HepG2 (cell line): ENCODE measurements at regions of chr2 and their contacts with region 1.

Region 1: GRCh38 chr2:76599732-76600368 is 889.1 kb upstream of the GCFC2 start:
- DNase-seq: peak; percentile 93
- ATAC-seq: peak; percentile 100
- H3K4me3 ChIP-seq: no peak overlapping the region
- H3K27ac ChIP-seq: no peak overlapping the region
- H3K4me1 ChIP-seq: no peaks in the 10 kb centered on the region
- H3K27me3 ChIP-seq: no peaks in the 10 kb centered on the region
- CTCF ChIP-seq: peak; percentile 91
- EP300 ChIP-seq: no peak
- POLR2A ChIP-seq: no peak
- RAD21 ChIP-seq: peak; percentile 91

Region 2: DNA sequence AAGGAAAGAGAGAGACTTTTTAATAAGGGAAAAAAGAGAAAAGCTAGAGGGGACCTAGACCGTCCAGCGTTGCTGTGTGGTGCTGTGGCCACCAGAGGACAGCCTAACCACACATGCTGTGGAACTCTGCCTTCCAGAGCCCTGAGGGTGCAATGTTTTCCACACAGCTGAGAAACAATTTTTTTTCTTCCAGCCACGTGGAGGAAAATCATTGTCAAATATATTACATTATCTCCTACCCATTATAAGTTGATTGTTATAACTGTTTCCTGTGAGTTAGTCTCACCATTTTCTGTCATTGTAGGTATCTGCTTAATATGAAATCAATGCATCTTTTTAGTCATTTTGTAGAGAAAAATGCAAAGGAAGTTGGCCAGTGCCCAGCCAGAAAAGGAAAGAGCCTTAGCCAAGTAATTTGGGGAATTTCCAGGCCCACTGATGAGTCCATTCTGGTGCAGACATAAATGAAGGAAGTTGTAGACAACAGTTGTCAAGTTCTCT is 959.2 kb before region 1 on chr2:
- CTCF ChIA-PET with region 1: no interaction called
- POLR2A ChIA-PET with region 1: no interaction called
- in situ Hi-C with region 1: no loop called
- intact Hi-C with region 1: loop called (anchors 2 kb)
- DNase-seq: peak; percentile 56
- ATAC-seq: peak; percentile 97
- H3K4me3 ChIP-seq: no peak overlapping the region
- H3K27ac ChIP-seq: no peak overlapping the region
- H3K4me1 ChIP-seq: peaks cover 17% of the 10 kb centered on the region
- H3K27me3 ChIP-seq: no peaks in the 10 kb centered on the region; a peak in 1 of 5 replicates
- CTCF ChIP-seq: peak; percentile 96
- EP300 ChIP-seq: no peak
- POLR2A ChIP-seq: no peak
- RAD21 ChIP-seq: peak; percentile 93

Region 3: GRCh38 chr2:75729861-75730260 is 870.0 kb before region 1 on chr2:
- CTCF ChIA-PET with region 1: interaction called, 3 read pairs
- POLR2A ChIA-PET with region 1: no interaction called
- in situ Hi-C with region 1: no loop called
- intact Hi-C with region 1: loop called (anchors 1 kb)
- DNase-seq: peak; percentile 12
- ATAC-seq: 0 out of 3 replicates have a peak, but pooled peaks have one; percentile 36
- H3K4me3 ChIP-seq: no peak overlapping the region
- H3K27ac ChIP-seq: no peak overlapping the region
- H3K4me1 ChIP-seq: no peaks in the 10 kb centered on the region
- H3K27me3 ChIP-seq: 0 out of 5 replicates have a peak, but pooled peaks cover 0 to 6% of the 10 kb centered on the region in 2 experiments
- CTCF ChIP-seq: peak; percentile 60
- EP300 ChIP-seq: no peak
- POLR2A ChIP-seq: no peak
- RAD21 ChIP-seq: no peak

Region 4: DNA sequence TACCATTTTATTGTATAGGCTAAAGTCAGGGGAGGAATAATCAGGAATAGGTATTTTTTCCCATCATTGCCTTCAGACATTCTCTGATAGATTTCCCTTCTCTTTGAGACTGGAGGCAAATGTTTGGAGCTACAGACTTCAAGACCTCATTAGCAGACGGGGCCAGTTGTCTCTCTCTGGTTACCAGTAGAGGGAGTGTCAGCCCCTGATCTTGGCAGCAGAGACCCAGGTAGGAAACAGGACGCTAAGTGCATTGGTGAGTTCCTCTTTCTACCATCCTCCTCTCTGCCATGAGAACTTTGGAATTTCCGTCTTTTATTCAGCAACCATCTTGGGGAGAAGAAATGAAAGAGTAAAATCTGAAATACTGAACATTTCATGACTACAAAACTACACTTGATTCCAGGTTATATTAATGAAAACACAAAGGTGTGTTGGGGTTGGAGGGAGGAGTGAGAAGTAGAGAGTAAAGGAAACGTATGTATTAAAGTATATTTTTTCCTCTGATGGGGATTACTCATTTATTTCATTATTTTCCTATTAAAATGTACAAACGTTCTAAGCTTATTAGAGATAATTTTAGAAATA is 703.0 kb before region 1 on chr2:
- CTCF ChIA-PET with region 1: interaction called, 13 read pairs
- POLR2A ChIA-PET with region 1: no interaction called
- in situ Hi-C with region 1: no loop called
- intact Hi-C with region 1: loop called (anchors 1 kb)
- DNase-seq: peak; percentile 60
- ATAC-seq: peak; percentile 100
- H3K4me3 ChIP-seq: no peak overlapping the region
- H3K27ac ChIP-seq: no peak overlapping the region
- H3K4me1 ChIP-seq: no peaks in the 10 kb centered on the region
- H3K27me3 ChIP-seq: no peaks in the 10 kb centered on the region
- CTCF ChIP-seq: peak; percentile 88
- EP300 ChIP-seq: no peak
- POLR2A ChIP-seq: no peak
- RAD21 ChIP-seq: peak; percentile 54

Region 5: GRCh38 chr2:76080154-76080553 is 519.7 kb before region 1 on chr2:
- CTCF ChIA-PET with region 1: no interaction called
- POLR2A ChIA-PET with region 1: no interaction called
- in situ Hi-C with region 1: no loop called
- intact Hi-C with region 1: loop called (anchors 1 kb)
- DNase-seq: peak; percentile 3
- ATAC-seq: peak; percentile 88
- H3K4me3 ChIP-seq: no peak overlapping the region
- H3K27ac ChIP-seq: no peak overlapping the region
- H3K4me1 ChIP-seq: no peaks in the 10 kb centered on the region
- H3K27me3 ChIP-seq: no peaks in the 10 kb centered on the region
- CTCF ChIP-seq: peak; percentile 46; the same call in 1 of the 2 replicates
- EP300 ChIP-seq: no peak
- POLR2A ChIP-seq: no peak
- RAD21 ChIP-seq: no peak

Region 6: GRCh38 chr2:78070693-78071092 is 1470.8 kb after region 1 on chr2:
- CTCF ChIA-PET with region 1: no interaction called
- POLR2A ChIA-PET with region 1: no interaction called
- in situ Hi-C with region 1: no loop called
- intact Hi-C with region 1: no loop called
- DNase-seq: no peak
- ATAC-seq: no peak
- H3K4me3 ChIP-seq: no peak overlapping the region
- H3K27ac ChIP-seq: no peak overlapping the region
- H3K4me1 ChIP-seq: no peaks in the 10 kb centered on the region
- H3K27me3 ChIP-seq: no peaks in the 10 kb centered on the region
- CTCF ChIP-seq: no peak
- EP300 ChIP-seq: no peak
- POLR2A ChIP-seq: no peak
- RAD21 ChIP-seq: no peak